ENCODE measurements at regions of chr2 and their contacts with region 1.

Region 1: DNA sequence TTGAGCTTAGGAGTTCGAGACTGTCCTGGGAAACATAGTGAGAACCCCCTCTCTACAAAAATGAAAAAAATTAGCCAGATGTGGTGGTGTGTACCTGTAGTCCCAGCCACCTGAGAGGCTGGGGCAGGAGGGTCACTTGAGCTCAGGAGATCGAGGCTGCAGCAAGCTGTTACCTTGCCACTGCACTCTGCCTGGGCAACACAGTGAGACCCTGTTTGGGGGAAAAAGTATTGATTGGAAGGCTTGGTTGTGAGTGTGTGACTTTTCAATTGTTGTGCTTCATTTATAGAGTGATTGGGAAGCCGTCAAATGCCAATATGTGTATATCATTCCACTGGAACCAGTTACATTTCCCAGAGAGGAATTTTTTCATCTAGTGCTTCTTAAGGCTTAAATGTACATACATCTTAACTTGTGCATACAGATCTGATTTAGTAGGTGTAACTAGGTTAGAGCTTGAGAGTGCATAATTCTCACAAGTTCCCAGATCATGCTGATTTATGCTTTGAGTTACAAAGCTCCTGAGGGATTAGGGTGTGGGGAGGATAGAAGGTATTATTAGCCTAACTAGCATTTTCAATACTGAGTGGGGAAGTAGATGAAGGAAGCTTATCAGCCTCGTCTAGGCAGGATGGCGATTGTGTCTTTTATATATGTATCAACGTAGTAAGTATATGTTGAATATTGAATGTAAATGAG is 15.3 kb downstream of the WDR43 start:
- DNase-seq: no peak
- ATAC-seq: no peak
- H3K4me3 Mint-ChIP-seq: no peak overlapping the region
- H3K27ac Mint-ChIP-seq: no peak overlapping the region
- H3K4me1 Mint-ChIP-seq: peaks cover 3% of the 10 kb centered on the region
- H3K27me3 Mint-ChIP-seq: no peaks in the 10 kb centered on the region
- CTCF ChIP-seq: no peak

Region 2: GRCh38 chr2:28821295-28821958 is 88.4 kb before region 1 on chr2:
- CTCF ChIA-PET with region 1: no interaction called
- POLR2A ChIA-PET with region 1: no interaction called
- intact Hi-C with region 1: no loop called
- DNase-seq: peak; percentile 17
- ATAC-seq: peak; percentile 72
- H3K4me3 Mint-ChIP-seq: no peak overlapping the region
- H3K27ac Mint-ChIP-seq: no peak overlapping the region
- H3K4me1 Mint-ChIP-seq: peaks cover 4% of the 10 kb centered on the region
- H3K27me3 Mint-ChIP-seq: no peaks in the 10 kb centered on the region
- CTCF ChIP-seq: no peak

Region 3: DNA sequence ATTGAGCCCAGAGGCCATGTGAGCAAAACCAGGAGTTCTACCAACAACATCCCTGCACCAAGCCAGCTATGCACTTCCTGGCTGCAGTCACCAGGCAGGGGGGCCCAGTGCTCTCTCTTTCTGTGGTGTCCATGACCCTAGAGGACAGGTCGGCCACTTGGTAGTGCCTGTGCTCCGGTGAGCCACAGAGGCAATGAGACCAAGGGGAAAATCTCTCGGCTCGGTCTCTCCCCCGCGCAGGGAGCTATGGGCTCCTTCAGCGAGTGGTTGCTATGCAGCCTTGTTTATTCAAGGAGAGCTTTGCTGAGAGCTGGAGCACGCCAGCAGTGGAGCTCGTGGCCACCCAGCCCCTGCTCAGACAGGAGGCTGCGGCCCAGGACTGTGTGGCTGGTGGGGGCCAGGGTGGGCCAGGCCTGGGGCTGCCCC is 71.2 kb after region 1 on chr2 and contains the start of gene TOGARAM2:
- CTCF ChIA-PET with region 1: no interaction called
- POLR2A ChIA-PET with region 1: interaction called, 10 read pairs
- intact Hi-C with region 1: no loop called
- DNase-seq: no peak
- ATAC-seq: no peak
- H3K4me3 Mint-ChIP-seq: no peak within 1 kb of the TSS
- H3K27ac Mint-ChIP-seq: no peak within 1 kb of the TSS
- H3K4me1 Mint-ChIP-seq: no peaks in the 10 kb centered on the region
- H3K27me3 Mint-ChIP-seq: peaks cover 4% of the 10 kb centered on the region
- CTCF ChIP-seq: no peak
- total RNA-seq, gene TOGARAM2: 0.22 TPM in 1 of 2 replicates, not detected in the other

Measured in activated B cell treated with CpG ODN at 0.5 μM for 24 hours (primary cell).